Caco-2 (cell line): ENCODE measurements at regions of chr11 and their contacts with region 1.

Region 1: GRCh38 chr11:61446211-61446651 is 16.3 kb downstream of the SDHAF2 start:
- DNase-seq: peak; percentile 83 to 88
- H3K4me3 ChIP-seq: no peak overlapping the region
- H3K4me3 Mint-ChIP-seq: no peak overlapping the region
- H3K27ac Mint-ChIP-seq: no peak overlapping the region
- H3K4me1 ChIP-seq: no peaks in the 10 kb centered on the region
- H3K4me1 Mint-ChIP-seq: peaks cover 6% of the 10 kb centered on the region
- H3K27me3 ChIP-seq: no peaks in the 10 kb centered on the region
- H3K27me3 Mint-ChIP-seq: no peaks in the 10 kb centered on the region
- CTCF ChIP-seq: peak; percentile 79 to 91

Region 2: GRCh38 chr11:61281581-61282250 is 164.5 kb before region 1 on chr11:
- CTCF ChIA-PET with region 1: no interaction called
- POLR2A ChIA-PET with region 1: no interaction called
- intact Hi-C with region 1: no loop called
- DNase-seq: no peak
- H3K4me3 ChIP-seq: no peak overlapping the region
- H3K4me3 Mint-ChIP-seq: no peak overlapping the region
- H3K27ac Mint-ChIP-seq: no peak overlapping the region
- H3K4me1 ChIP-seq: 0 out of 2 replicates have a peak, but pooled peaks cover 5% of the 10 kb centered on the region
- H3K4me1 Mint-ChIP-seq: peaks cover 10% of the 10 kb centered on the region
- H3K27me3 ChIP-seq: no peaks in the 10 kb centered on the region
- H3K27me3 Mint-ChIP-seq: no peaks in the 10 kb centered on the region
- CTCF ChIP-seq: no peak

Region 3: GRCh38 chr11:61429691-61430582 is 16.3 kb before region 1 on chr11 and contains the starts of genes CPSF7 and SDHAF2:
- CTCF ChIA-PET with region 1: interaction called, 13 read pairs
- POLR2A ChIA-PET with region 1: interaction called, 9 read pairs
- intact Hi-C with region 1: no loop called
- DNase-seq: peak; percentile 97
- H3K4me3 ChIP-seq: peak within 1 kb of the TSS; percentile 67
- H3K4me3 Mint-ChIP-seq: peak within 1 kb of the TSS; percentile 92
- H3K27ac Mint-ChIP-seq: peak within 1 kb of the TSS; percentile 98
- H3K4me1 ChIP-seq: peaks cover 8% of the 10 kb centered on the region; the same call in 1 of the 2 replicates
- H3K4me1 Mint-ChIP-seq: peaks cover 6% of the 10 kb centered on the region
- H3K27me3 ChIP-seq: no peaks in the 10 kb centered on the region
- H3K27me3 Mint-ChIP-seq: no peaks in the 10 kb centered on the region
- CTCF ChIP-seq: no peak
- total RNA-seq, gene CPSF7: 123 and 128 TPM in 2 replicates
- total RNA-seq, gene SDHAF2: 49.2 and 52.1 TPM in 2 replicates

Region 4: DNA sequence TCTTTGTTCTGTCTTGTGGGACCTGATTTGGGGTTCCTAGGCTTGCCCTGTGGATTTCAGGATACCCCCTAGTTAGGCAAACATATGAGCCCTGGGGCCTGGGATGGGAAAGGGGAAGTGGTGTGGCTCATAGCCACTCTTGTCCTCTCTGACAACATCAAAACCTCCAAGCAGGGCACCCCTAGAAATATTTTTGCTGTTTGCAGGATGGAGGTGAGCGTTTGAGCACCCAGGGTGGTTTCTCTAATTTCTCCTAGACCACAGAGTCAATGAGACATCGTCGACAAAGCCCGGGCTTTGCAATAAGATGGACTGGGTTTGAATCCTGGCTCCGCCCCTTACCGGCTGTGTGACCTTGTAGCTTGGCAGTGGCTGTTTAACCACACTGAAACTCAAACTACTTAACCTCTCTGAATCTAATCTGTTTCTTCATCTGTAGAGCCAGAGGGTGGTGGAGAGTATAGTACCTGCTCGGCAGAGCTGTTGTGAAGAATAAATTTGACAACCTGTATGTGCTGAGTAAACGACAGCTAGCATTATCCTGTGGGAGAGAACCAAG is 57.1 kb after region 1 on chr11:
- CTCF ChIA-PET with region 1: no interaction called
- POLR2A ChIA-PET with region 1: no interaction called
- intact Hi-C with region 1: no loop called
- DNase-seq: no peak
- H3K4me3 ChIP-seq: no peak overlapping the region
- H3K4me3 Mint-ChIP-seq: no peak overlapping the region
- H3K27ac Mint-ChIP-seq: no peak overlapping the region
- H3K4me1 ChIP-seq: peaks cover 9% of the 10 kb centered on the region; the same call in 1 of the 2 replicates
- H3K4me1 Mint-ChIP-seq: peaks cover 7% of the 10 kb centered on the region
- H3K27me3 ChIP-seq: no peaks in the 10 kb centered on the region
- H3K27me3 Mint-ChIP-seq: peaks cover 5% of the 10 kb centered on the region
- CTCF ChIP-seq: no peak

Region 5: GRCh38 chr11:61516675-61517572 is 70.7 kb after region 1 on chr11:
- CTCF ChIA-PET with region 1: interaction called, 18 read pairs
- POLR2A ChIA-PET with region 1: no interaction called
- intact Hi-C with region 1: loop called (anchors 1 kb)
- DNase-seq: peak in 1 of 2 experiments; percentile 73
- H3K4me3 ChIP-seq: no peak overlapping the region
- H3K4me3 Mint-ChIP-seq: no peak overlapping the region
- H3K27ac Mint-ChIP-seq: no peak overlapping the region
- H3K4me1 ChIP-seq: peaks cover 23% of the 10 kb centered on the region
- H3K4me1 Mint-ChIP-seq: peaks cover 23% of the 10 kb centered on the region
- H3K27me3 ChIP-seq: no peaks in the 10 kb centered on the region
- H3K27me3 Mint-ChIP-seq: no peaks in the 10 kb centered on the region
- CTCF ChIP-seq: peak; percentile 97 to 99

Region 6: GRCh38 chr11:61587521-61588453 is 141.6 kb after region 1 on chr11:
- CTCF ChIA-PET with region 1: no interaction called
- POLR2A ChIA-PET with region 1: no interaction called
- intact Hi-C with region 1: loop called (anchors 5 kb)
- DNase-seq: peak; percentile 87 to 89
- H3K4me3 ChIP-seq: peak overlapping the region; percentile 61
- H3K4me3 Mint-ChIP-seq: peak overlapping the region; percentile 72
- H3K27ac Mint-ChIP-seq: no peak overlapping the region
- H3K4me1 ChIP-seq: peaks cover 16% of the 10 kb centered on the region
- H3K4me1 Mint-ChIP-seq: peaks cover 9% of the 10 kb centered on the region
- H3K27me3 ChIP-seq: no peaks in the 10 kb centered on the region
- H3K27me3 Mint-ChIP-seq: no peaks in the 10 kb centered on the region
- CTCF ChIP-seq: peak; percentile 29 to 52

Region 7: DNA sequence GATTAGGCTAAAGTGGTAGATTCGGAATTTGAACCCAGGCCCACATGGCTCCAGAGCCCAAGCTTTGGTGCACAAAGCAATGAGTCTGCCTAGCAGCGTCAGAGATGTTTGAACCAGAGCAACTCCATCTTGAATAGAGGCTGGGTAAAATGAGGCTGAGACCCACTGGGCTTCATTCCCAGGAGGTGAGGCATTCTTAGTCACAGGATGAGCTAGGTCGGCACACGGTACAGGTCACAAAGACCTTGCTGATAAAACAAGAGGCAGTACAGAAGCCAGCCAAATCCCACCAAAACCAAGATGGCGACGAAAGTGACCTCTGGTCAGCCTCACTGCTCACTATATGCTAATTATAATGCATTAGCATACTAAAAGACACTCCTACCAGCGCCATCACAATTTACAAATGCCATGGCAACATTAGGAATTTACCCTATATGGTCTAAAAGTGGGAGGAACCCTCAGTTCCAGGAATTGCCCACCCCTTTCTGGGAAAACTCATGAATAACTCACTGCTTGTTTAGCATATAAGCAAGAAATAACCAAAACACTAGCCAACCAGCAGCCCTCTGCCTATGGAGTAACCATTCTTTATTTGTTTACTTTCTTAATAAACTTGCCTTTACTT is 193.7 kb after region 1 on chr11:
- CTCF ChIA-PET with region 1: interaction called, 11 read pairs
- POLR2A ChIA-PET with region 1: no interaction called
- intact Hi-C with region 1: loop called (anchors 1 kb)
- DNase-seq: no peak
- H3K4me3 ChIP-seq: no peak overlapping the region
- H3K4me3 Mint-ChIP-seq: no peak overlapping the region
- H3K27ac Mint-ChIP-seq: no peak overlapping the region
- H3K4me1 ChIP-seq: 0 out of 2 replicates have a peak, but pooled peaks cover 4% of the 10 kb centered on the region
- H3K4me1 Mint-ChIP-seq: no peaks in the 10 kb centered on the region
- H3K27me3 ChIP-seq: no peaks in the 10 kb centered on the region
- H3K27me3 Mint-ChIP-seq: no peaks in the 10 kb centered on the region
- CTCF ChIP-seq: no peak